Activated T-helper 1 cell treated with anti-CD3 and anti-CD28 coated beads, Interleukin-12 subunit alpha, Interleukin-12 subunit beta, Interleukin-2, Interleukin-4 antibody, amounts not matched to agents 30 ng/mL and 10 ng/mL and 1 ng/mL, durations not matched to agents 14 hours and 24 hours and 36 hours (primary cell): ENCODE measurements at regions of chr10 and their contacts with region 1.

Region 1: DNA sequence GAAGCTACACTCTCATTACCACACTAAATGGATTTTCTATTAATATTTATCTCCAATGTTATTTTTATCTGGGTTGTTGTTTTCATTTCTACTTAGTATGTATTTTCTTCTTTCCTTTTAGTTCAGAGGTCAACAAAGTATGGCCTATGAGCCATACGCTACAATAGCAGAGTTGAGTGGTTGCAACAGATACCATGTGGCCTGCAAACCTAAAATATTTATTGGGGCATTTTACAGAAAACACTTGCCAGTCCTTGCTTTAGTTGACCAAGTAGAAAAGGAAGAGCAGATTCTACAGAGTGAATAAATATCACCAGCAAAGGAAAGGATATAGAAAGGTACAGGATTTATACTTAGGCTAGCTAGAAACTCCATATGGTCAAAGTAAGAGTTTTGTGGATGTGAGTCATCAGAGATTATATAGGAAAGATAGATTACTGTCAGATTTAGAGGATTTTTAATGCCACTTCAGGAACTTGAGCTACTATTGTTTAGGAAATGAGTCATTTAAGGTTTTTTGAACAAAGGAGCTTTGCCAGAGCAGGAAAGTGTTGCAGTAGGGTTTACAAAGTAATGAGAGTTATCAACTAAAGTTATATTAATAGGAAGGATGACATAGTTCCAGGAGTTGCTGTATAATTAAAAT is 323.3 kb upstream of the KAT6B start:
- DNase-seq: no peak
- H3K4me3 Mint-ChIP-seq: no peak overlapping the region
- H3K27ac Mint-ChIP-seq: peak overlapping the region; percentile 9
- H3K4me1 Mint-ChIP-seq: peaks cover 40% of the 10 kb centered on the region
- H3K27me3 Mint-ChIP-seq: no peaks in the 10 kb centered on the region

Region 2: DNA sequence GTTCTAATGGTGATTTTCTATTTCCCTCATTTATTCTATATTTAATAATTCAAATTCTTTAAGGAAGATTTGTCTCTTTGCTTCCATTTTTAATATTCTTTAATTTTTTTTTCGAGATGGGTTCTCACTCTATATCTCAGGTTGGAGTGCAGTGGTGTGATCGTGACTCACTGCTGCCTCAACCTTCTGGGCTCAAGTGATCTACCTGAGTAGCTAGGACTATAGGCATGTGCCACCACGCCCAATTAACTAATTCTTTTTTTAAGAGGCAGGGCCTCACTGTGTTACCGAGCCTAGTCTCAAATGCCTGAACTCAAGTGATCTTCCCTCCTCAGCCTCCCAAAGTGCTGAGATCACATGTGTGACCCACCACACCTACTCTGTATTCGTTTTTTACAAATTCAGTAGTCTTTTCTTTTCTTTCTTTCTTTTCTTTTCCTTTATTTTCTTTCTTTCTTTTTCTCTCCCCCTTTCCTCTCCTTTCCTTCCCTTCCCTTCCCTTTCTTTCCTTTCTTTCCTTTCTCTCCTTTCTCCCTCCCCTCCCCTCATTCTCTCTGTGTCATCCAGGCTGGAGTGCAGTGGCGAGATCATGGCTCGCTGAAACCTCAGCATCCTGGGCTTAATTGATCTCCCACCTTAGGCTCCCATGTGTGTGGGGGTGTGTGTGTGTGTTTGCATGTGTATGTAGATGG is 28.9 kb before region 1 on chr10:
- intact Hi-C with region 1: no loop called
- DNase-seq: no peak
- H3K4me3 Mint-ChIP-seq: no peak overlapping the region
- H3K27ac Mint-ChIP-seq: no peak overlapping the region
- H3K4me1 Mint-ChIP-seq: no peaks in the 10 kb centered on the region
- H3K27me3 Mint-ChIP-seq: no peaks in the 10 kb centered on the region

Region 3: DNA sequence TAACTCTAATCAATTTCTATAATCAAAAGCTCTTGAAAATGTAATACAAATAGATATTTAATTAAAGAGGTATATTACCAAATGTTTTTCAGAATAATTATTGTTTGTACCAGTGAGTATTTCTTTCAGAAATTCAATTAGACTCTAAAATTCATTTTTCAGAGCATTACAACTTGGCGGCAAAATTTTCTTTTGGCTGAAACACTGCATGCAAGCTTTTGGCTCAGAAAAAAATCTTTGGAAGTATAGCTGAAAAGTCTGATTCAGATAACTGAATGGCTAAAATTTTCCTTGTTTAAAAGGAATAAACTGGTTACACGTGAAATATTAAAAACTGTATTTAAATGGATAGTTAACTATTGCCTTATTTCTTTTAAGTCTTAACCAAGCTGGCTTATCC is 120.7 kb after region 1 on chr10:
- intact Hi-C with region 1: no loop called
- DNase-seq: no peak
- H3K4me3 Mint-ChIP-seq: no peak overlapping the region
- H3K27ac Mint-ChIP-seq: no peak overlapping the region
- H3K4me1 Mint-ChIP-seq: no peaks in the 10 kb centered on the region
- H3K27me3 Mint-ChIP-seq: no peaks in the 10 kb centered on the region

Region 4: GRCh38 chr10:74799721-74800221 is 296.7 kb after region 1 on chr10:
- intact Hi-C with region 1: loop called (anchors 5 kb)
- DNase-seq: peak; percentile 2
- H3K4me3 Mint-ChIP-seq: peak overlapping the region; percentile 3
- H3K27ac Mint-ChIP-seq: peak overlapping the region; percentile 61
- H3K4me1 Mint-ChIP-seq: peaks cover 13% of the 10 kb centered on the region
- H3K27me3 Mint-ChIP-seq: no peaks in the 10 kb centered on the region